Activated naive CD4-positive, alpha-beta T cell treated with anti-CD3 and anti-CD28 coated beads, Interleukin-2, amount 10 ng/mL, durations not matched to agents 7 days and 5 days (primary cell): ENCODE measurements at regions of chr14 and their contacts with region 1.

Region 1: DNA sequence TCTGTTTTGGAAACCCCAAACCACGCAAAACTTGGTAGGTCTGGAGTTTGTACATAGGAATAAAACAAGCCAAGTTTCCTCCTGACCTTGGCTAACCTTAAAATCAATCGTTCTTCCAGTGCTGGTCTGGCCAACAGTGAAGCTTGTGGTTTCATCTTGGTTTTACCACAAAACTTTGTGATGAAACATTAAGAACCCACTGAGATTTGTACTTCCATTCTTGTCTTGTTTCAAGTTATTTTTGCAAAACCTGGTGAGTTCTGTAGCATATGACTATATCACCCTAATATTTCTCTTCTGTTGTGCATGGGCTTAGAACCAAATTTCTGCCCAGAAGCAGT is 26.4 kb downstream of the SIX1 start:
- DNase-seq: no peak
- H3K4me3 Mint-ChIP-seq: no peak overlapping the region
- H3K27ac Mint-ChIP-seq: no peak overlapping the region
- H3K4me1 Mint-ChIP-seq: no peaks in the 10 kb centered on the region
- H3K27me3 Mint-ChIP-seq: peaks cover 21% of the 10 kb centered on the region

Region 2: GRCh38 chr14:60575008-60575407 is 47.9 kb before region 1 on chr14:
- CTCF ChIA-PET with region 1: no interaction called
- DNase-seq: no peak
- H3K4me3 Mint-ChIP-seq: no peak overlapping the region
- H3K27ac Mint-ChIP-seq: no peak overlapping the region
- H3K4me1 Mint-ChIP-seq: no peaks in the 10 kb centered on the region
- H3K27me3 Mint-ChIP-seq: peaks cover 9% of the 10 kb centered on the region

Region 3: DNA sequence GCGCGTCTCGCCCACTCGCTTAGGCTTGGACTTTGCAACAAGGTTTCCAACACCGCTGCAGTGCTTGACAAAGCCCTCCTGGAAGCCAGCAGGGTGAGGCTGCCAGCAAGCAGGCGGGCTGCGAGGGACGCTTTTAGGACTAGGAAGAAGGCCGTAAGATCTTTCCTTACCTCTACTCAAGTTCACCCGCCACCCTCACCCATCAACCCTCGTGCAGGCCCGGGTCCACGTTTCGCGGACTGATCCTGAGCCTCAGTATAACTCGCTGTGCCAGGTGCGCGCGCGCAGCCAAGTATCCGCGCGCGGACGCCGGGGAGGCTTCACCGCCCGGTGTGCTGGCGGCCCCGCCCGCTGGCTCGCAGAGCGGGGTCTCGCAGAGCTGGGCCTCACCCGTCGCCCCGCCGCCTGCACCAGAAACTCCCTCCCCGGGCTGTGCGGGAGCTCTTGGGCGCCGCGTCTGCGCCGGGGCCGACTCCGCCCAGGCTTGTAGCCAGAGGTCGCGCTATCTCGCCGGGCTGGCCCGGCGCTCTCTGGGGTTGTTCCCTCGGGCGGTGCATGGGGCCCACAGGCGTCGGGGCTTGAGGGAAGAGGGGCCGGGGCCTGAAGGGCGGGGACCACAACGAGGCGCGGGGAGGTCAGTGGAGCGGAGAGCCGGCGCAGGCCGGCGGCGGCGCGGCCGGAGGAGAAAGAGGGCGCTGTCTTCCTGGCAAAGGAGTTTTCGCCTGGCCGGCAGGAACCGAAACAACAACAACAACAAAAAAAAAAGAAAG is 34.0 kb after region 1 on chr14:
- CTCF ChIA-PET with region 1: no interaction called
- DNase-seq: peak; percentile 34
- H3K4me3 Mint-ChIP-seq: peak overlapping the region; percentile 73
- H3K27ac Mint-ChIP-seq: no peak overlapping the region
- H3K4me1 Mint-ChIP-seq: peaks cover 33% of the 10 kb centered on the region
- H3K27me3 Mint-ChIP-seq: peaks cover 97% of the 10 kb centered on the region

Region 4: DNA sequence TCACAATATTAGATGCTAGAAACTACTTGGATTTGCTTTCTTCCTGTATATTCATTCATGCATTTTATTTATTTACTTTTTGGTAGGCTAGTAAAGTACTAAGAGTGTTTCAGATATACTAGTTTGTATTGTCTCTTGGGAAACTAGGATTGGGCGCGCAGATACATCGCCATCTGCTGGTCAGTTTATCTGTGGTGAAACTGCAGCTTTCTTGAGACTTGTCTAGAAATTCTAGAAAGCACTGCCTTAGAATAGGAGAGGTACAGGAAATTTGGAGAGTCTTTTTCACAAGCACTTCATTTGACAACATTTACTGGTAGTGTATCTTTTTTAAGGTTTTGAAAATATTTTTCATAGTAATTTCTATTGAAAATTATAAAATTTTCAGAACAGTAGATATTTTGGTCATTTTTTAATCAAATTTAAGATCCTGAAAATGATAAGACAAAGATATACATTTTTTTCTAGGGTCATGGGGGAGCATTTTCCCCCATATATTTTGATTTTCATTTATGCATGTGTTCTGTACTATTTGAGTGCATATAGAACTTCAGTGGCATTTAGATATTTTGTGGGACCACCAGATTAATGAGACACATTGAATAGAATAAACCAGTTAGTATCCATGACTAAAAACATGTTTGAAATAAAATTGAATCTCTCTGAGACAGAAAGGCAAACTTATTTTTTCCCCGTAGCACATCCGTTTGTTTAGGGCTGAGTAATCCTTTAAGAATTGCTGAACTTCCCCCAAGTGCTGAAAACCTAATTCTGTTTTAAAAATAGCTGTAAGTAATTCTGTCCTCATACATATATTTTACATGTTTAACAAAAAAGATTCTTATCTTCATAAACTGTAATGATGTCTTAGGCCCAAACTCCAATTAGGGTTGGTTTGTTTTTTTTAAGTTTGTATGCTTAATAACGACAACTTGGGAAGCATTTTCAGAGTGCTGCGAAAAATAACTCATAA is 402.6 kb after region 1 on chr14:
- CTCF ChIA-PET with region 1: interaction called, 14 read pairs
- DNase-seq: peak; percentile 65
- H3K4me3 Mint-ChIP-seq: no peak overlapping the region
- H3K27ac Mint-ChIP-seq: no peak overlapping the region
- H3K4me1 Mint-ChIP-seq: no peaks in the 10 kb centered on the region
- H3K27me3 Mint-ChIP-seq: no peaks in the 10 kb centered on the region

Region 5: GRCh38 chr14:61252369-61253063 is 629.6 kb after region 1 on chr14:
- CTCF ChIA-PET with region 1: interaction called, 32 read pairs
- DNase-seq: peak; percentile 74
- H3K4me3 Mint-ChIP-seq: no peak overlapping the region
- H3K27ac Mint-ChIP-seq: no peak overlapping the region
- H3K4me1 Mint-ChIP-seq: peaks cover 9% of the 10 kb centered on the region
- H3K27me3 Mint-ChIP-seq: peaks cover 24% of the 10 kb centered on the region